ENCODE measurements at regions of chr3 and their contacts with region 1.

Region 1: DNA sequence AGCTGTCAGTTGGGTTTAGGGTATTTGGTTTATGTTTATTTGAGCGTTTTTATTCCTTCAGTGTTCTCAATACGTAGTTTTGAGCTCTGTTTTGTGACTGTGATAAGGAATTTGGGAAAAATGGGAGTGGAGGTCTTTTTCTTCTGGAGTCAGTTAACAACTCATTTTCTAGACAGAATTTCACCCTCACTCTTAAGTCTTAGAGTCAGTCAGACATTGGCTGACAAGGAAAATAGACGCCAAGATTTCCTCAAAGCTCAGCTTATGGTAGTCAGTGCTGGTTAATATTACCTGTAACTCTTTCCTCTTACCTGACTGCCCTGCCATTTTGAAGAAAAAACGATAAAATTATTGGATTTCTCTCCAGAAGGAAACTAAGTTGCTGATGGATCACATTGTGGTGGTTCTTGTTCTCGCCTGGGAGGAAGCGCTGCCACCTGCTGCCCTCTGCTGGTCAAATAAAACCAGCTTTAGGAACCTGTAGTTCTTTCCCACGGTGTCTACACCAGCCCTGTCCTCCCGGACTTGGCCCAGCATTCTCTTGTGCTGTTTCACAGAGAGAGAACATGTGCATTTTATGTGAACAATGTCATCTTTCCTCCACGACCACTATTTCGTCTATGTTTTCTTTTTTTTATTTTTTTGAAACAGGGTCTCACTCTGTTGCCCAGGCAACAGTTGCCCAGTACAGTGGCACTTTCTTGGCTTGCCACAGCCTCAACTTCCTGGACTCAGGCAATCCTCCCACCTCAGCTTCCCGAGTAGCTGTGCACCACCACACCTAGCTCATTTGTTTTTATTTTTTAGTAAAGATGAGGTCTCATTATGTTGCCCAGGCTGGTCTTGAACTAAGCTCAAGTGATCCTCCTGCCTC is 41.4 kb upstream of the UMPS start:
- DNase-seq: peak; percentile 57 to 70 (median 63)
- H3K4me3 ChIP-seq: no peak overlapping the region
- H3K4me3 Mint-ChIP-seq: no peak overlapping the region
- H3K27ac ChIP-seq: no peak overlapping the region
- H3K27ac Mint-ChIP-seq: no peak overlapping the region
- H3K4me1 ChIP-seq: peaks cover 3% of the 10 kb centered on the region
- H3K4me1 Mint-ChIP-seq: peaks cover 0 to 6% (median 3%) of the 10 kb centered on the region in 4 donors
- H3K27me3 ChIP-seq: no peaks in the 10 kb centered on the region
- H3K27me3 Mint-ChIP-seq: peaks cover 8 to 20% of the 10 kb centered on the region in 2 donors

Region 2: DNA sequence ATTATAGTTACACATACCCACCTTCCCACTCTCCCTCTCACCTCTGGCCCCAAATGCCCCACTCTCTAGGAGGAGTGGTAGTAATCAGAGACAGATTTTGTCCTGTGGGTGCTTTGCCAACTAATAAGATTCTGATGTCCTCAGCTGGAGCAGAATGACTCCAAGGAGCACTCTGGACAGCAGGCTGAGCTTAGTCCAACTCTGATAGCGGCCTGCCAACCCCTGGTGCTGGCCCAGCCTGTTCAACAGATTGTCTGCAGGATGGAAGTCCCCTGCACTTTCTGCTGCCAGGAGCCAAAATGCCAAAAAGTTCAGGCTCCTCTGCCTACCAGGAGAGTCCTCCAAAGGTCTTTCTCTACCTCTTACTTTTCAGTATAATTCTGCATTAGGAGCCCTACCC is 119.1 kb before region 1 on chr3:
- CTCF ChIA-PET with region 1: interaction called, 264 read pairs
- POLR2A ChIA-PET with region 1: interaction called, 3 read pairs
- intact Hi-C with region 1: loop called (anchors 1 kb)
- DNase-seq: no peak
- H3K4me3 ChIP-seq: no peak overlapping the region
- H3K4me3 Mint-ChIP-seq: no peak overlapping the region
- H3K27ac ChIP-seq: no peak overlapping the region
- H3K27ac Mint-ChIP-seq: no peak overlapping the region
- H3K4me1 ChIP-seq: no peaks in the 10 kb centered on the region
- H3K4me1 Mint-ChIP-seq: peaks cover 0 to under 1% (median 0%) of the 10 kb centered on the region in 4 donors
- H3K27me3 ChIP-seq: no peaks in the 10 kb centered on the region
- H3K27me3 Mint-ChIP-seq: peaks cover 2 to 3% of the 10 kb centered on the region in 2 donors

Region 3: GRCh38 chr3:124584552-124585391 is 104.0 kb before region 1 on chr3:
- CTCF ChIA-PET with region 1: interaction called, 7 read pairs
- POLR2A ChIA-PET with region 1: no interaction called
- intact Hi-C with region 1: loop called (anchors 5 kb)
- DNase-seq: peak in 4 of 5 donors; percentile 36 to 49 (median 43)
- H3K4me3 ChIP-seq: peak overlapping the region; percentile 52 to 58
- H3K4me3 Mint-ChIP-seq: peak overlapping the region; percentile 87 to 92 (median 90)
- H3K27ac ChIP-seq: no peak overlapping the region
- H3K27ac Mint-ChIP-seq: peak overlapping the region; percentile 74 to 91 (median 82)
- H3K4me1 ChIP-seq: peaks cover 36% of the 10 kb centered on the region
- H3K4me1 Mint-ChIP-seq: peaks cover 17 to 41% (median 29%) of the 10 kb centered on the region in 4 donors
- H3K27me3 ChIP-seq: no peaks in the 10 kb centered on the region
- H3K27me3 Mint-ChIP-seq: peaks cover 5 to 16% of the 10 kb centered on the region in 2 donors

Region 4: DNA sequence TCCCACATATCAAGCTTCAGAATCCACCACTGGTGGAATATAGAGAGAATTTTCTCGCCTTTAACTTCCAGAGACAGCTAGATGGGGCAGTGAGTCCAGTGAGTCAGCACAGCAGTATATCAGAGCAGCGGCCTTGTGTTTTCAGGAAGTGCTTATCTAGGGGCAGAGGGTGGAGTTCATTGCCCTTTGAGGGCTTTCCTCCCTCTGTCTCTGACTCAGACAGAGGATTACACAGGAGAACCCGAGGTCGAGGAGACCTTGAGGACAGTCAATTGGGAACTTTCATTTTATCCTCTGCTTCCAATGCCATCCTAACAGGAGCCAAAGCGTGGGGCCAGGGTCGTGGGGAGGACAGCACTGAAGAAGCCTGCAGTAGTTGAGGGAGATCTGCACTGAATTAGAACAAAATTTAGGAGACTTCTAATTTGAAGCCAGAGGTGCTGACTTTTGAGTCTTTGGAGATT is 68.2 kb before region 1 on chr3:
- CTCF ChIA-PET with region 1: interaction called, 18 read pairs
- POLR2A ChIA-PET with region 1: no interaction called
- intact Hi-C with region 1: loop called (anchors 1 kb)
- DNase-seq: peak in 4 of 5 donors; percentile 9 to 19 (median 16)
- H3K4me3 ChIP-seq: peak overlapping the region in 1 of 2 donors; percentile 43
- H3K4me3 Mint-ChIP-seq: peak overlapping the region; percentile 65 to 85 (median 80)
- H3K27ac ChIP-seq: peak overlapping the region; percentile 36
- H3K27ac Mint-ChIP-seq: peak overlapping the region; percentile 62 to 95 (median 89)
- H3K4me1 ChIP-seq: peaks cover 23% of the 10 kb centered on the region
- H3K4me1 Mint-ChIP-seq: peaks cover 25 to 47% (median 32%) of the 10 kb centered on the region in 4 donors
- H3K27me3 ChIP-seq: no peaks in the 10 kb centered on the region
- H3K27me3 Mint-ChIP-seq: no peaks in the 10 kb centered on the region

Region 5: DNA sequence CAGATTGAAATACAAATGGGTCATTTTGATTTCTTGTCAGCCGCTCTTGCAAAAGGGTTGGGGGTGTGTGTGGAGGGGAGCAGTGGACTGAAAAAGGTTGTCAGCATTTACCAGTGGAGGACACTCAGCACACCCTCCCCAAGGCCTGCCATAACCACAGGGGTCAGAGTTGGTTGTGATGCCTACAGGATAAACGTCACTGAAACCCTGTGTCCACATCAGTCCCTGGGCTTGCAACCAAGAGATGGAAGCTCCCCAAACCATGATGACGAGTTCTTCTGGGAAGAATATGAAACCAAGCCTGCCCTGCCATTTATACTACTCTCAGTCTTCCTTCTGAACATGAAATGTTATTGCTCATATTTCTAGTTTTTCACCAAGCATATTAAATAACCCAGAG is 12.6 kb before region 1 on chr3:
- CTCF ChIA-PET with region 1: interaction called, 10 read pairs
- POLR2A ChIA-PET with region 1: no interaction called
- intact Hi-C with region 1: no loop called
- DNase-seq: no peak
- H3K4me3 ChIP-seq: no peak overlapping the region
- H3K4me3 Mint-ChIP-seq: no peak overlapping the region
- H3K27ac ChIP-seq: no peak overlapping the region
- H3K27ac Mint-ChIP-seq: no peak overlapping the region
- H3K4me1 ChIP-seq: peaks cover 5% of the 10 kb centered on the region
- H3K4me1 Mint-ChIP-seq: peaks cover 2 to 10% (median 4%) of the 10 kb centered on the region in 4 donors
- H3K27me3 ChIP-seq: no peaks in the 10 kb centered on the region
- H3K27me3 Mint-ChIP-seq: no peaks in the 10 kb centered on the region

Region 6: GRCh38 chr3:124700880-124701684 is 12.3 kb after region 1 on chr3:
- CTCF ChIA-PET with region 1: interaction called, 19 read pairs
- POLR2A ChIA-PET with region 1: no interaction called
- intact Hi-C with region 1: no loop called
- DNase-seq: no peak
- H3K4me3 ChIP-seq: no peak overlapping the region
- H3K4me3 Mint-ChIP-seq: no peak overlapping the region
- H3K27ac ChIP-seq: no peak overlapping the region
- H3K27ac Mint-ChIP-seq: no peak overlapping the region
- H3K4me1 ChIP-seq: no peaks in the 10 kb centered on the region
- H3K4me1 Mint-ChIP-seq: no peaks in the 10 kb centered on the region
- H3K27me3 ChIP-seq: peaks cover 5% of the 10 kb centered on the region
- H3K27me3 Mint-ChIP-seq: peaks cover 11 to 16% of the 10 kb centered on the region in 2 donors

Measured in CD4-positive, alpha-beta memory T cell (primary cell).